ENCODE measurements at regions of chr3 and their contacts with region 1.

Region 1: DNA sequence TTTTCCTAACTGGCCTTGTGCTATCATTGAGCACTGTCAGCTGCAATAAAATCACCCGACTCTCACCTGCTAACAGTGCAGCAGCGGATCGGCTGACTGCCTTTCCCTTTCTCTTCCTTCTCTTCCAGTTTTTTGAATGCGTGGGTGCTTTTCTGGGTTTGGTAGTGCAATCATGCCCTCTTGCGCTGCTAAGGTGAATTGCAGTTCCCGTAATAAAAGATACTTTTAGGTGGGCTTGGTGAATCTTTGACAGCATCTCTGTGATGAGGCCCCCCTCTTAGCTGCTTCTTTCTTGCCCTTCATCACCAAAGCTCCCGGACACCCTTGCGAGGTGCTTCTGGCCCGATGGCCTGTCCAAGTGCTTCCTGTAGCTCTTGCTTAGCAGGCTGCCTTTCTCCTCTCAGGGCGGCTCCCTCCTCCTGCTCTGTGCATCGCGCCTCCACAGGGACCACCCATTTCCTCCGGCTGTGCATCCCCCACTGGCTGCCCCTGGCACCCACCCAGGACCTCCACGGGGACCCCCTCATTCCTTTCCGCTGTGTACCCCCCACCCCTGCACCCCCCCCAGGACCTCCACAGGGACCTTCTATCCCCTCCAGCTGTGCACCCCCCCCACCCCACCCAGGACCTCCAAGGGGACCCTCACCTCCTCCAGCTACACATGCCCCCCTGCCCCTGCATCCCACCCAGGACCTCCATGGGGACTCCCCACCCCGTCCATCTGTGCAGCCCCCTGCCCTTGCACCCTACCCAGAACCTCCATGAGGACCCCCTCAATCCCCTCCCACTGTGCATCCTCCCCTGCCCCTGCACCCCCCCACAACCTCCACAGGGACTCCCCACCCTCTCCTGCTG is 50.8 kb upstream of the RPL32 start:
- DNase-seq: peak; percentile 67

Region 2: GRCh38 chr3:12905316-12906071 is 13.3 kb after region 1 on chr3:
- CTCF ChIA-PET with region 1: no interaction called
- POLR2A ChIA-PET with region 1: no interaction called
- DNase-seq: no peak

Region 3: DNA sequence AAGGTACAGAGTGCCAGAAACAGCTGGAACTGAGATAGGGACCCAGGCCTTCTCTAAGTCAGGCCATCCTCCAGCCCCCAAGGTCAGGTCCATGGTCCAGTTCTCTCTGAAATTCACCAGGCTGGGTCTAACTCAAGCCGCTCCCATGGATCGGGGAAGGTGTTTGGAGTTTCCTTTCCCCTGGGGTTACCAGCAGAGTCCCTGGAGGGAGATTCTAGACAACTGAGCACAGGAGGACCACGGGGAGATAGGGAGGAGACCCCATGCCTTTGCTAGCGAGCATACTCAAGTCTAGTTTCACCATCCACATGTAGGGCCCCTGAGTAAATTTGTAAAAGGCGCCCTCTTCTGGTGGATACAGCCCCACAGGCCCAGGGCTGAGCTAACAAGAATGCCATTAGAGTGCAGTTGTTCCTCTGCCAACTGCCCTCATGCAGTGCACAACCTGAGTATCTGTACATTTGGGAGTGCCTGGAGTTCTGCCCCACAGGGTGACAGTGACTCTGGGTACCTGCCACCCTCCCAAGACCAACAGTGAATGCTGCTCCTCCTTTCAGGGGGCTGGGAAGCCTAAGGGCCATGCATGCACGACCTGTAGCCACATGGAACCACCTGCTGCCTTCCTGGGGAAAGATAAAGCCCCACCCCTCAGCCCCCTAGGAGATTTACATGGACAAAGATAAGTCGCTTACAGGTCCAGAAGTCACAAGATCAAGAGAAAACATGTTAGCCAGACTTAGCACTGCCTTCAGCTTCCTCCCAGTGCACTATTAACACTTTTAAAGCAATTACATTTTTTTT is 92.0 kb after region 1 on chr3:
- CTCF ChIA-PET with region 1: interaction called, 11 read pairs
- POLR2A ChIA-PET with region 1: no interaction called
- DNase-seq: peak; percentile 69

Region 4: DNA sequence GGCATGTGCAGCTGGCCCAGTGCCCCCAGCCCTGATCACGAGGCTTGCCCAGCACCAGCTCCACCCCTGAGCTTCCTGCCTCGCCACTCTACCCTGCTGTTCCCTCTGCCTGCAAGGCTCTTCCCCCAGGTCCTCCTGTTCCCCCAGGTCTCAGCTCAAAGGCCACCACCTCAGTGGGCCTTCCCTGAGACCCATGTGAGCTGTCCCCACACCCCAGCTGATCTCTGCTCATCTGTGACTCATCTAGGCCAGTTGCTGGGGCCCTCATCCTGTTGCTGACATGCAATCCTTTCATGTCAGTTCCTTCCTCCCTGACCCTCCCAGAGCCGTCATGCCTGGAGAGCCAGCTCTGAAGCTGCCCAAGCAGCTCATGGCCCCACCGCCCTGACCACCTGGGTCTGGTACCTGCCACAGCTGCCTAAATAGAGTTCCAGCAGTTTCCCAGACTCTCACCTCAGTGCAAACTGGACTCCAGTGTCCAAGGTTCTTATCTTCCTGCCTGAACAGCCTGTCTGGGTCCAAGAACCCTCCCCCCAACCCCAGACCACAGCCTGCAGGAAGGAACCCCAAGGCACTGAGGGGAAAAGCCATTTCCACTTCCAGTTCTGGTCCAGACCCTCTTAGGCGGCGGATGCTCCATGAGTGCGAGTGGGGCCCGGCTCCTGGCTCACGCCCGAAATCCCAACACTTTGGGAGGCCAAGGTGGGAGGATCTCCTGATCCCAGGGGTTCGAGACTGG is 297.6 kb after region 1 on chr3:
- CTCF ChIA-PET with region 1: no interaction called
- POLR2A ChIA-PET with region 1: no interaction called
- DNase-seq: no peak